Uterus (tissue), 4 donors: ENCODE measurements at regions of chr17 and their contacts with region 1.

Region 1: DNA sequence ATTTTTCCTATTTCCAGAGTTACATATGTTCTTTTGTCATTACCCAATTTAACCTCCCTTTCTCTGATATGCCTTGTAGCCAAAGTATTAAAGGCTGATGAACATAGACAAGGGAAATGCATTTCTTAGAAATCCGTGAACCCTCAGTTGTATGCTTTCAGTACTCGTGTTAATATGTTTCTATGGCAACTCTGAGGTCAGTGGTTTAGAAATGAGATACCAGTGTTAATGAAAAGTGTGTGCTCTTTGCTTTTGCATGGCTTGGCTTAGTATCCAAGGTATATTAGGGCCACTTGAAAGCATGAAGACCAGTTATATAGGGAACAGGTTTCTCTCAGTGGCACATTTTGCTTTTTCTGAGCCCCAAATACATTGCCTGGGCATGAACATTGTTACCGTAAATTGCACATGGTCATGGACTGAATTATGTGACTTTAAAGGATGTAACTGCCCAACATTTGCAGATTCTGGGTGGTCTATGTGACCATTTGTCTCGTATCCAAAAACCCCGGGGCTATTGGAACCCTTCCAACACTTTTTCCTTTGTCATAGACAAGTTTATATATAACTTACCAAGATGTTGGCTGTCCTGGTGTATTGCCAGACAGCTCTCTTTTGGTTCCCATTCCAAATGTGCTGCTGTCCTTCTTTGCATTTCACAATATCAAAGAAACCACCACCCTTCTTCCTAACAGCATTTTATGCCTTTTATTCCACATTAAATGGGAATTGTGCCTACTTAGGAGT is 17.5 kb downstream of the ABHD15 start:
- DNase-seq: no peak
- H3K4me3 ChIP-seq: no peak overlapping the region
- H3K27ac ChIP-seq: no peak overlapping the region
- H3K4me1 ChIP-seq: no peaks in the 10 kb centered on the region
- H3K27me3 ChIP-seq: no peaks in the 10 kb centered on the region
- CTCF ChIP-seq: no peak
- POLR2A ChIP-seq: no peak

Region 2: GRCh38 chr17:29369831-29370735 is 179.3 kb before region 1 on chr17:
- intact Hi-C with region 1: loop called (anchors 10 kb)
- DNase-seq: peak; percentile 46 to 50
- H3K4me3 ChIP-seq: no peak overlapping the region
- H3K27ac ChIP-seq: peak overlapping the region in 1 of 2 donors; percentile 48
- H3K4me1 ChIP-seq: no peaks in the 10 kb centered on the region
- H3K27me3 ChIP-seq: no peaks in the 10 kb centered on the region
- CTCF ChIP-seq: peak; percentile 74 to 83 (median 78)
- POLR2A ChIP-seq: no peak